K562 (cell line): ENCODE measurements at regions of chr1 and their contacts with region 1.

Region 1: DNA sequence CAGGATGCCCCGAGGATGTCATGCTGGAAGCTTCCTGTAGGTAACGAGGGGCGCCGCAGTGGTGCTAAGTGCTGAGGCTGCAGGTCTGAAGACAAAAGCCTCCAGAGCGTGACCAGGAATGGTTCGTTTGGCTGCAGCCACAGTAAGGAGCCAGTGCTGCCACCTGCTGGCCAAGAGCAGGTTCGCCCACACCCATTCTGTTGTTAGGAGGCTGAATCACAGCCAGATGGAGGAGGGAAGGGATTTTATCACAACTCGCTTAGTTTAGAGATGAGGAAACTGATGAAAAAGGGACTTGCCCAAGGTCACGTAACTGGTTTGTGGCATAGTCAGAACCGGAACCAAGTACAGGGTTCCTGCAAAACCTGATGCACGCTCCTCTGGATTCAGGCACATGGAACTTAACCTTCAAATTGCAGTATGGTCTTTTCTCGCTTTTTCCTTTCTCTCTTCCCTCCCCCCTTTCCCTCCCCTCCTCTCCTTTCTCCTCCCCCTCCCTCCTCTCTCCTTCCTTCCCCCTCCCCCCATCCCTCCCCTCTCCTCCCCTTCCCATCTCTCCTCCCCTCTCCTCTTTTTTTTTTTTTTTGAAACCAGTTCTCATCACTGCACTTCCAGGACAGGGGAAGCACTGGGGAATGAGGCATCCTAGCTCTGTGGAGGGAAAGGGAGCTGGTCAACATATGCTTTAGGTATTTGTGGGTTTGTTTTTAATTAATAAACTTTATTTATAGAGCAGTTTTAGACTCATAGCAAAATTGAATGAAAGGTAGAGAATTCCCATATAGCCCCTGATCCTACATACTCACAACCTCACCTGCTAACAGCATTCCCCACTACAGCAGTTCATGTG is 81.8 kb downstream of the MPZL1 start:
- DNase-seq: peak; percentile 92 to 96 (median 94)
- ATAC-seq: peak; percentile 98
- H3K4me3 ChIP-seq: no peak overlapping the region
- H3K27ac ChIP-seq: no peak overlapping the region
- H3K4me1 ChIP-seq: peaks cover 0 to 7% of the 10 kb centered on the region in 2 experiments; a peak in 4 of 5 replicates
- H3K27me3 ChIP-seq: no peaks in the 10 kb centered on the region
- CTCF ChIP-seq: peak; percentile 98 to 100 (median 98)
- EP300 ChIP-seq: peak; percentile 8; the same call in 1 of the 2 replicates
- POLR2A ChIP-seq: no peak
- RAD21 ChIP-seq: peak; percentile 91 to 95

Region 2: DNA sequence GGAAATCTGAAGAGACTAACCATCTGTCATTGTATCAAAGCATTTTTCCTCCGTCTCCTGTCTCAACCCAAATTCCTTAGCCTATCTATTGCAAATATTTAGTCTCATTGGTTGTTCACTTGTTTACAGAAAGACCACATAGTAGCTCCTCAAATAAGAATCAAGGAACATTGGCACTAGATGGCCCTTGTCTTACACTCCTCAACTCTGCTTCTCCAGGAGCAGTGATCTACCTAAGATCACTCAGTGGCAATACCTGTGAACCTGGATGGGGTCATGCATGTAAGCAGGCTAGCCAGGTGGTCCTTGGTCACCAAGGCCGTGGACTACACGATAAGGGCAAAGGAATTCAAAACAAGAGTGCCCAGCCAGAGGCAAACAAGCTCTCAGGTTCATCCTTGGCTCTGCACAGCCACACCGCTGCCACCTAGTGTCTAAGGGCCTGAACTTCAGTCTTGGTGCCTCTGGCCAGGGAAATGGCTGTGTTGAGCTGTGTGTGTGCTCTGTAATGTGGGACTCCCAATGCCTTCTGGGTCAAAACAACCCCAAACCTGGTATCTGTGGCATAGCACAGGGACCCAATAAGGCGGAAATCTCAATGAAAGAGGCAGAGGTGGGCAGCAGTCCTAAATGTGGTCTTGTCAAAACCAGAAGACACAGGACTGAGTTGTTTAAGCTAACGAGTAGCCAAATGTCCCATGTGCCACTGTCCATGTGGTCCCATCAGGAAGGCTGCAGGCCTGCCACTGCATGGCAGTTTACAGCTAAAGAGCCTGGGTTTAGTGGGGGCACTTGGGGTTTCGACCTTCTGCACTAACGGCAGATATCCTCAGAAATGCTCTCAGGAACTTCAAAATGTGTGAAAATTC is 278.7 kb after region 1 on chr1:
- CTCF ChIA-PET with region 1: no interaction called
- POLR2A ChIA-PET with region 1: no interaction called
- in situ Hi-C with region 1: no loop called
- intact Hi-C with region 1: loop called (anchors 2 kb)
- DNase-seq: peak; percentile 78 to 87 (median 81)
- ATAC-seq: peak; percentile 92
- H3K4me3 ChIP-seq: no peak overlapping the region
- H3K27ac ChIP-seq: no peak overlapping the region; the same call in 2 of the 3 replicates
- H3K4me1 ChIP-seq: peaks cover 8 to 9% of the 10 kb centered on the region in 2 experiments; a peak in 4 of 5 replicates
- H3K27me3 ChIP-seq: no peaks in the 10 kb centered on the region
- CTCF ChIP-seq: peak; percentile 90 to 98 (median 96)
- EP300 ChIP-seq: no peak
- POLR2A ChIP-seq: no peak
- RAD21 ChIP-seq: peak; percentile 62 to 89